Adrenal gland (tissue), 19 donors: ENCODE measurements at regions of chr13 and their contacts with region 1.

Region 1: DNA sequence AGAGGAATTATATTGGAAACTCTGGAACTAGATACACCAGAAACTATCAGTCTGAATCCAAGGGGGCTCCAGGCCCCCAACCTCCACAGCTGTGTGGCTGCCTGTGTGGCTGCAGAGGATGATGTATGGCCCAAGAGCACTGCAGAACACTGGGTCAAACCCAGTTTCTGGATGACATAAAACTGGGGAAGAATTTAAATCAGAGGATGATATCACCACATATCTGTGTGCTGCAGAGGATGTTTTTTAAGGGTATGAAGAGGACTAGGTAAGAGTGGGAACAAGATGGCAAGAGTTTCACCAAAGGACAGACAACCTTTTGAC is 226.4 kb downstream of the SUCLA2 start:
- DNase-seq: no peak
- H3K4me3 ChIP-seq: no peak overlapping the region
- H3K27ac ChIP-seq: no peak overlapping the region
- H3K4me1 ChIP-seq: no peaks in the 10 kb centered on the region
- H3K27me3 ChIP-seq: peaks cover 4% of the 10 kb centered on the region
- CTCF ChIP-seq: no peak
- POLR2A ChIP-seq: no peak

Region 2: GRCh38 chr13:46831588-46832194 is 942.9 kb before region 1 on chr13:
- intact Hi-C with region 1: loop called in 1 of 2 experiments (anchors 10 kb)
- DNase-seq: peak; percentile 13 to 58 (median 40)
- H3K4me3 ChIP-seq: no peak overlapping the region
- H3K27ac ChIP-seq: no peak overlapping the region
- H3K4me1 ChIP-seq: no peaks in the 10 kb centered on the region
- H3K27me3 ChIP-seq: no peaks in the 10 kb centered on the region
- CTCF ChIP-seq: peak; percentile 53 to 83 (median 66)
- POLR2A ChIP-seq: no peak

Region 3: GRCh38 chr13:46975173-46975572 is 799.5 kb before region 1 on chr13:
- intact Hi-C with region 1: loop called in 1 of 2 experiments (anchors 10 kb)
- DNase-seq: no peak
- H3K4me3 ChIP-seq: no peak overlapping the region
- H3K27ac ChIP-seq: no peak overlapping the region
- H3K4me1 ChIP-seq: no peaks in the 10 kb centered on the region
- H3K27me3 ChIP-seq: no peaks in the 10 kb centered on the region
- CTCF ChIP-seq: no peak
- POLR2A ChIP-seq: no peak

Region 4: DNA sequence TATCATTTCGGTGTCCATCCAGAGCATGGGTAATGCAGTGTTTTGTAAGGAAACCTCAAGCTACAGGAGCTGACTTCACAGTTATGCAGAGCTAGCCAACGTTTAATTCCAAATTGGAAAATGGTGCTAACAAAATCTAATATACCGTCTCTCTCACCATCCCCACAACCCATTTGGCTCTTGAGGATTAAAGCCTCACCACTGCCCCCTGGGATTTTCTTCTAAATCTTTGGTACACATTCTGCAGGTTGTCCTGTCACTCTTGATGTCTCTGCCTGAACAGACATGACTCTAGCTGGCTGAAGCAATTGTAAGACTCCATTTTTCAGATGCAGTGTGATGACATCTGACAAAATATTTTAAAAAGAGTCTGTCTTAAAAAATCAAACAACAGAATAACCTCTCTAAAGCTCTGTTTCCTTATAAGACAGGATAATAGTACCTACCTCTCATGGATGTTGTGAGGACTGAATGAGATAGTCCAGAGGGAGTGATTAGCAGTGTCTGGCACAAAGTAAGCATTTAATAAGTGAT is 225.3 kb before region 1 on chr13:
- intact Hi-C with region 1: no loop called
- DNase-seq: no peak
- H3K4me3 ChIP-seq: no peak overlapping the region
- H3K27ac ChIP-seq: no peak overlapping the region
- H3K4me1 ChIP-seq: no peaks in the 10 kb centered on the region
- H3K27me3 ChIP-seq: no peaks in the 10 kb centered on the region
- CTCF ChIP-seq: no peak
- POLR2A ChIP-seq: no peak